SK-N-SH (cell line): ENCODE measurements at regions of chr4 and their contacts with region 1.

Region 1: GRCh38 chr4:150242820-150243458 is 164.7 kb downstream of the DCLK2 start:
- DNase-seq: peak; percentile 74
- H3K4me3 ChIP-seq: peak overlapping the region in 1 of 2 experiments; percentile 18; a peak in 1 of 4 replicates
- H3K27ac ChIP-seq: no peak overlapping the region; a peak in 1 of 4 replicates
- H3K4me1 ChIP-seq: peaks cover 3 to 19% of the 10 kb centered on the region in 2 experiments; a peak in 3 of 4 replicates
- H3K27me3 ChIP-seq: no peaks in the 10 kb centered on the region
- CTCF ChIP-seq: peak; percentile 93
- EP300 ChIP-seq: no peak
- RAD21 ChIP-seq: peak; percentile 95

Region 2: GRCh38 chr4:149980941-149981340 is 262.0 kb before region 1 on chr4:
- CTCF ChIA-PET with region 1: interaction called, 19 read pairs
- POLR2A ChIA-PET with region 1: no interaction called
- DNase-seq: peak; percentile 26
- H3K4me3 ChIP-seq: no peak overlapping the region
- H3K27ac ChIP-seq: peak overlapping the region in 1 of 2 experiments; percentile 22; a peak in 1 of 4 replicates
- H3K4me1 ChIP-seq: no peaks in the 10 kb centered on the region; a peak in 2 of 4 replicates
- H3K27me3 ChIP-seq: no peaks in the 10 kb centered on the region
- CTCF ChIP-seq: peak; percentile 79
- EP300 ChIP-seq: no peak
- RAD21 ChIP-seq: peak; percentile 77

Region 3: DNA sequence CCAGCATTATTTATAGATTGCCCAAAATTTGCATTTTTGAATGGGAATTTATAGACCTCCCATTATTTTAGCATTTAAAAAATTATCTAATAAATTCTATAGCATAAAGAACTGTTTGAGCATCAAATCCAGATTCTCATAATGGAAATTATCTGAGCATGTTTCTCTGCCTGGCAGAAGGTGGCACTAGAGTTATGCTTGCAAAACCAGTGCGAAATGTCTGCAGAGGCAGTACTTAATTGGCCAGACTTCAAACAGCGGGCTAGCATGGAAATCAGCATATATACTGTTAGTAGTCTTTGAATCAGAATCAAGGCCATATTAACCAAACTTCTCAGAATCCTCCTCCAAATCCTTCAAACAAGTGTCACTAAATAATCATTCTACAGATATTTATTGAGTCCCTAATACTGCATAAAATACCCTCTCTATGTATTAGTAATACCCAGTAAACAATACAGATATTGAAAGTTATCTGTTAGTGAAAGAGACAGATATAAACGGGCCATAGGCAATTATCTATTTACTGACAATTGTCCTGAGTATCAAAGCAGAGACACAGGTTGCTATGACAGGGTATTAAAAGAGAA is 243.4 kb before region 1 on chr4:
- CTCF ChIA-PET with region 1: interaction called, 197 read pairs
- POLR2A ChIA-PET with region 1: no interaction called
- DNase-seq: peak; percentile 34
- H3K4me3 ChIP-seq: no peak overlapping the region; a peak in 1 of 4 replicates
- H3K27ac ChIP-seq: no peak overlapping the region
- H3K4me1 ChIP-seq: peaks cover 6 to 31% of the 10 kb centered on the region in 2 experiments; a peak in 3 of 4 replicates
- H3K27me3 ChIP-seq: no peaks in the 10 kb centered on the region
- CTCF ChIP-seq: peak; percentile 96
- EP300 ChIP-seq: 0 out of 4 replicates have a peak, but pooled peaks of 1 of the 2 experiments have one; percentile 6
- RAD21 ChIP-seq: peak; percentile 98

Region 4: GRCh38 chr4:150078637-150079581 is 164.0 kb before region 1 on chr4:
- CTCF ChIA-PET with region 1: interaction called, 22 read pairs
- POLR2A ChIA-PET with region 1: no interaction called
- DNase-seq: peak; percentile 87
- H3K4me3 ChIP-seq: peak overlapping the region; percentile 83 to 92
- H3K27ac ChIP-seq: peak overlapping the region; percentile 83 to 93
- H3K4me1 ChIP-seq: peaks cover 12 to 22% of the 10 kb centered on the region in 2 experiments
- H3K27me3 ChIP-seq: no peaks in the 10 kb centered on the region
- CTCF ChIP-seq: 0 out of 2 replicates have a peak, but pooled peaks have one; percentile 23
- EP300 ChIP-seq: no peak
- RAD21 ChIP-seq: peak; percentile 29

Region 5: GRCh38 chr4:150224896-150225591 is 17.9 kb before region 1 on chr4:
- CTCF ChIA-PET with region 1: interaction called, 20 read pairs
- POLR2A ChIA-PET with region 1: no interaction called
- DNase-seq: no peak
- H3K4me3 ChIP-seq: peak overlapping the region in 1 of 2 experiments; percentile 48; a peak in 2 of 4 replicates
- H3K27ac ChIP-seq: peak overlapping the region; percentile 69 to 90
- H3K4me1 ChIP-seq: peaks cover 9 to 29% of the 10 kb centered on the region in 2 experiments; a peak in 3 of 4 replicates
- H3K27me3 ChIP-seq: no peaks in the 10 kb centered on the region
- CTCF ChIP-seq: no peak
- EP300 ChIP-seq: peak in 1 of 2 experiments; percentile 42; a peak in 2 of 4 replicates
- RAD21 ChIP-seq: no peak

Region 6: GRCh38 chr4:150867148-150867547 is 624.2 kb after region 1 on chr4:
- CTCF ChIA-PET with region 1: interaction called, 18 read pairs
- POLR2A ChIA-PET with region 1: no interaction called
- DNase-seq: peak; percentile 62
- H3K4me3 ChIP-seq: no peak overlapping the region
- H3K27ac ChIP-seq: no peak overlapping the region
- H3K4me1 ChIP-seq: no peaks in the 10 kb centered on the region
- H3K27me3 ChIP-seq: no peaks in the 10 kb centered on the region
- CTCF ChIP-seq: peak; percentile 75
- EP300 ChIP-seq: no peak
- RAD21 ChIP-seq: peak; percentile 89